B cell (primary cell): ENCODE measurements at regions of chr9 and their contacts with region 1.

Region 1: DNA sequence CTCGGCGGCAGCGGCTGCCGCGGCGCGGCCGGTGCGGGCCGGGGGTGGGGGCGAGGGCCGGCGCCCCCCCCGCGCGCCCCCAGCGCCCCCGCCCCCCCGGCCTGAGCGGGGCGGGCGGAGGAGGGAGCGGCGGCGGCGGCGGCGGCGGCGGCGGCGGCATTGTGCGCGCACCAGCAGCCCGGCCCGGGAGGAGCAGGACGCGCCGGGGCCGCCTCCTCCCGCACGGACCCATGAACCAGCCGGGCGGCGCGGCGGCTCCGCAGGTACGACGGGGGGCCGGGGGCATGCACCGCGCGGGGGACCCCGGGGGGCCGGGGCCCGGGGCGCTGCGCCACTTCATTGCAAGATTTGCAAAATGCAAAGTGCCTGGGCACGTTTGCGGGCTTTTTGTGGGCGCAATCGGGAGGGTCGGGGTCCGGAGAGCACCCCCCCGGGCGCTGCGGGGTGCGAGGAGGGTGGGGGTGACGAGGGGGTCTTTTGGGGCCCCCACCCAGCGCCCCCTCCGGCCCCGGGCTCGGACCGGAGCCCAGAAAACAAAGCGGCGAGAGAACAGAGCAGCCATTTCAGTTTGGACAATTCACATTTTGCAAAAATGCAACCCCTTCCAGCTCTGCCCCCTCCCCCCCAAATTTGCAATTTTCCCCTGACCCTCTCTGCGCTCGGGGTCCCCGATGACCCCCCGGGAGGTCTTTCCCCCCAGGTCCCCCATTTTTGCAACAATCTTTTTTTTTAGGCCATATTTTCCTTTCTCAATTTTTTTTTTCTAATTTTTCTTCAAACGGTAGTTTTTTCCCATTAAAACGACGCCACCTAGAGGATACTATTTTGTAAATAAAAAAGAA is at the start of gene ZNF618:
- DNase-seq: peak; percentile 41
- ATAC-seq: peak; percentile 72
- H3K4me3 ChIP-seq: peak within 1 kb of the TSS; percentile 34 to 90 (median 70)
- H3K4me3 Mint-ChIP-seq: peak within 1 kb of the TSS; percentile 92
- H3K27ac ChIP-seq: no peak within 1 kb of the TSS
- H3K27ac Mint-ChIP-seq: peak within 1 kb of the TSS; percentile 11
- H3K4me1 ChIP-seq: peaks cover 0 to 3% of the 10 kb centered on the region in 2 donors
- H3K4me1 Mint-ChIP-seq: peaks cover 4% of the 10 kb centered on the region
- H3K27me3 ChIP-seq: peaks cover 0 to 3% (median 0%) of the 10 kb centered on the region in 4 experiments
- H3K27me3 Mint-ChIP-seq: peaks cover 33% of the 10 kb centered on the region
- CTCF ChIP-seq: peak; percentile 67
- total RNA-seq, gene ZNF618: 2.5 and 3.0 TPM in 2 replicates

Region 2: DNA sequence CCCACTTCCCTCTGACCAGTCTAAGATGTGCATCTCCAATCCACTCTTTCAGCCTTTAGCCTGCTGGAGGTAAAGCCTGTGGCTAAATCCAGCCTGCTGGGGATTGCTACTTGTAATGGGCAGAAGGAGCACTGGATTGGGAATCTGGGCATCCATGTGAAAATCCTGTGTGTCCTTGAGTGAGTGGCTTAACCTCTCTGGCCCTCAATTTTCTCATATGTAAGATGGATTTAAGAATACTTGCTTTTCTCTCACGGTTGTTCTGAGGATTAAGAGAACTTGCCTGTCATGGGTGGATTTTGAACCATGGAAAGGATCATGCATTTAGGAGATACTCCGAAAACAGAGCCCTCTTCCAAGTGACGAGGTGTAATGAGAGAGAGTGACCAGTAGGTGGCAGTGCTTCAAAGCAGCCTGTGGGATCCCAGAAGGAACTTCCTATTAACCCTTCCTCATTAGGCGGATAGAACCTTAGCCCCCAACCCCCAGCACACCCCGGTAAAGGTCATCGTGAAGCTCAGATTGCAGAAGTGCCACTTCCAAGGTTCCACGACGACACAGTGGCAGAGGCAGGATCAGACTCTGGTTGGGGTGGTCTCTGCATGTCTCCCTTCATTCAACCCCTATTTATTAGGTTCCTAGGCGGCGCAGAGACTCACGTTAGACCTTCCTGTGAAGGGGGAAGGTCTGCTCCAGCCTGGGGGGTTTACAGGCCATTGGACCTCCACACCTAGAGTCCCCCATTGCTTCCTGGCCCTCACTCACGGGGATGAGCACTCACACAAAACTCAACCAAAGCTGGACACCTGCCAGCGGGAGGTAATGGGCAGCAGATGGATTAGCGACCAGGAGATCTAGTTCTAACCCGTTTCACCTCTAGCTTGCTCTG is 69.0 kb before region 1 on chr9:
- CTCF ChIA-PET with region 1: interaction called, 6 read pairs
- POLR2A ChIA-PET with region 1: no interaction called
- intact Hi-C with region 1: loop called (anchors 1 kb)
- DNase-seq: peak; percentile 58
- ATAC-seq: peak; percentile 45
- H3K4me3 ChIP-seq: no peak overlapping the region
- H3K4me3 Mint-ChIP-seq: no peak overlapping the region
- H3K27ac ChIP-seq: no peak overlapping the region
- H3K27ac Mint-ChIP-seq: no peak overlapping the region
- H3K4me1 ChIP-seq: no peaks in the 10 kb centered on the region
- H3K4me1 Mint-ChIP-seq: peaks cover 3% of the 10 kb centered on the region
- H3K27me3 ChIP-seq: peaks cover 0 to 3% (median 0%) of the 10 kb centered on the region in 4 experiments
- H3K27me3 Mint-ChIP-seq: peaks cover 5% of the 10 kb centered on the region
- CTCF ChIP-seq: peak; percentile 82

Region 3: DNA sequence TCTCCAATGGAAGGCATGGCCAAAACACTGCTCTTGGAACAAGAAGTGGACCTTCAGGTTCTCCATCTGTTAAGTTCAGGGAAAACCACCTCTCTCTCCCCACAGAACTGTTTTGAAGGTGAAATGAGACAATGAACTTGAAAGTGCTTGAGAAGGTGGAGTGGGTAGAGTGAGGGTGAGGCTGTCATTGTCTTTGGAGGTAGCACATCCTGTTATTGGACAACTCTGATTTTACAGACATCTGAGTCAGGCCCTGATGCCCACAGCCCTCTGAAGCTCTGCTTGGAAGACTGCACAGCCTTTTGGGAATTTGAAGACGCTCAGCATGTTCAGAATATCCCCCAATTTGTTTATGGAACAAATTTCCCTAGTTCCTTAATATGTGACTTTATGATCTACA is 833.3 kb after region 1 on chr9:
- CTCF ChIA-PET with region 1: no interaction called
- POLR2A ChIA-PET with region 1: no interaction called
- intact Hi-C with region 1: no loop called
- DNase-seq: no peak
- ATAC-seq: no peak
- H3K4me3 ChIP-seq: no peak overlapping the region
- H3K4me3 Mint-ChIP-seq: no peak overlapping the region
- H3K27ac ChIP-seq: no peak overlapping the region
- H3K27ac Mint-ChIP-seq: no peak overlapping the region
- H3K4me1 ChIP-seq: no peaks in the 10 kb centered on the region
- H3K4me1 Mint-ChIP-seq: no peaks in the 10 kb centered on the region
- H3K27me3 ChIP-seq: peaks cover 0 to 5% (median 2%) of the 10 kb centered on the region in 4 experiments
- H3K27me3 Mint-ChIP-seq: peaks cover 40% of the 10 kb centered on the region
- CTCF ChIP-seq: no peak